ENCODE measurements at regions of chr9 and their contacts with region 1.

Region 1: DNA sequence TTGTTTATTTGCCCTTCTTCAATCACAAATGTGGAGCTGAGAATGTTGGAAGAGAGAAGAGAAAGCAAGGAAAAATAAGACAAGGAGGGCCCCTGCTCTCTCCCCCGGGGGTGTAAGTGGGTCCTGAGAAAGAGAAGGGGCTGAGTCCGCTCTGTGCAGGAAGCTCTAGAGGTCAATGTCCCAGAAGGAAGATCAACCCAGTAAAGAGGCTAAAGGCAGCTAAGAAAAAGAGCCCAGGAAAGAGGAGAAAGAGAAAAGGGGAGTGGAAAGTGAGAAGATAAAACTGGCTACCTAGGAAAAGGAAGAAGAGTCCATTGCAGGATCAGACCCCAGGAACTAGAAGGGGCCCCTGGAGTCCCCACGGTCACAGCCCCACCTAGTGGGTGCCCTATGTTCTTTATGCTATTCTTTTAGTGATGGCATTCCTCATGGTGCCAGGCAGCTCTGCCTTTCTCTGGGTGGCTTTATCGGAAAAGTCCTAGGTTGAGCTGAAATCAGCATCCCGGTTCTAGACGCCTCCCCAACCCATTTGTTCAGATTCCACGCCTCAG is 583.4 kb downstream of the ACTL7B start:
- DNase-seq: peak; percentile 29
- ATAC-seq: no peak
- H3K4me3 ChIP-seq: no peak overlapping the region
- H3K4me3 Mint-ChIP-seq: no peak overlapping the region
- H3K27ac ChIP-seq: no peak overlapping the region
- H3K27ac Mint-ChIP-seq: no peak overlapping the region
- H3K4me1 ChIP-seq: peaks cover 3 to 4% of the 10 kb centered on the region in 2 donors
- H3K4me1 Mint-ChIP-seq: peaks cover 3% of the 10 kb centered on the region
- H3K27me3 ChIP-seq: no peaks in the 10 kb centered on the region
- H3K27me3 Mint-ChIP-seq: peaks cover 6% of the 10 kb centered on the region
- CTCF ChIP-seq: peak; percentile 28

Region 2: DNA sequence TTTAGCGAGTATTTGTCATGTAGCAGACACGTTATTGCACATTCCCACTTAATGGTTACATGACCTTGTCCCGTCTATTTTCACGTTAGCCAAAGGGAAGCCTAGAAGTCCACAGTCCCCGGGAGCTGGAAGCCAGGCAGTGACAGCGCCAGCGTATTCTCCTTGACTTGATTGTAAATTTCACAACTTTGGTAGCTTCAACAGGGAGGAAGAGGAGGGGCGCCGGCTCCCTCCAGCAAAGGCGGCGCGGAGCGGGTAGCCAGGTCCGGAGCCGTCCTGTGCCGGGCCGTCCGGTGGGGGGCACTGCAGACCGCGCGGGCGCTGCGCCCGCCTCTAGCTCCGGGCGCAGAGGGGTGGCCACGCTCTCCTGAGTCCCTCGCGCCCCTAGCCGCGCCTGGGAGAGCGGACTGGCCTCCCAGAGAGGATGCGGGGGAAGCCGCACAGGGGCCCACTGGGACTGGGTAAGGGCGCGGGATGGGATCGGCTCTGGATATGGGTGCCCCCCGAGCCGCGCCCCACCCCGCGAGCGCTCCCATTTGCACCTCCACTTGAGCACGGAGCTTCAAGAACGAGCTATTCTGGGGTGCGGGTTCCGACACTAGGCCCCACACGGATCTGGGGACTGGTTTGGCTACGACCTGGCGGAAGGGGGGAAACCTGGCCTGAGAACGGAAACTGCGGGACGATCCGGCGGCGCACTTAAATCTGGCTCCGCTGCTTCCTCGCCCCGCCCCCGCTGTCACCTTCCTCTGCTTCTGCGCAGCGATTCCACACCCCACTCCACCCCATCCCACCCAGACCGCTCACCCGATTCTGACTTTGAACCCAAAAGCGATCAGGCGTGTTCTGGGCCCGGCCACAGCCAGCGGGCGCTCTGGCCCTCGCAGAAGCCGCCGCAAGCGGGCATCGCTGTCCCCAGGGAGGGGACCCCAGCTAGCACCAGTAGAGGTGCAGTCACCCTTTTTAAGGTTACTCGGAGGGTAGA is 806.7 kb before region 1 on chr9:
- CTCF ChIA-PET with region 1: interaction called, 10 read pairs
- POLR2A ChIA-PET with region 1: no interaction called
- intact Hi-C with region 1: loop called (anchors 5 kb)
- DNase-seq: peak; percentile 64
- ATAC-seq: peak; percentile 84
- H3K4me3 ChIP-seq: peak overlapping the region; percentile 25 to 59 (median 47)
- H3K4me3 Mint-ChIP-seq: peak overlapping the region; percentile 80
- H3K27ac ChIP-seq: no peak overlapping the region
- H3K27ac Mint-ChIP-seq: no peak overlapping the region
- H3K4me1 ChIP-seq: peaks cover 13 to 15% of the 10 kb centered on the region in 2 donors
- H3K4me1 Mint-ChIP-seq: peaks cover 13% of the 10 kb centered on the region
- H3K27me3 ChIP-seq: peaks cover 0 to 25% (median 17%) of the 10 kb centered on the region in 4 experiments
- H3K27me3 Mint-ChIP-seq: peaks cover 39% of the 10 kb centered on the region
- CTCF ChIP-seq: peak; percentile 78